ENCODE measurements at regions of chr10 and their contacts with region 1.

Region 1: DNA sequence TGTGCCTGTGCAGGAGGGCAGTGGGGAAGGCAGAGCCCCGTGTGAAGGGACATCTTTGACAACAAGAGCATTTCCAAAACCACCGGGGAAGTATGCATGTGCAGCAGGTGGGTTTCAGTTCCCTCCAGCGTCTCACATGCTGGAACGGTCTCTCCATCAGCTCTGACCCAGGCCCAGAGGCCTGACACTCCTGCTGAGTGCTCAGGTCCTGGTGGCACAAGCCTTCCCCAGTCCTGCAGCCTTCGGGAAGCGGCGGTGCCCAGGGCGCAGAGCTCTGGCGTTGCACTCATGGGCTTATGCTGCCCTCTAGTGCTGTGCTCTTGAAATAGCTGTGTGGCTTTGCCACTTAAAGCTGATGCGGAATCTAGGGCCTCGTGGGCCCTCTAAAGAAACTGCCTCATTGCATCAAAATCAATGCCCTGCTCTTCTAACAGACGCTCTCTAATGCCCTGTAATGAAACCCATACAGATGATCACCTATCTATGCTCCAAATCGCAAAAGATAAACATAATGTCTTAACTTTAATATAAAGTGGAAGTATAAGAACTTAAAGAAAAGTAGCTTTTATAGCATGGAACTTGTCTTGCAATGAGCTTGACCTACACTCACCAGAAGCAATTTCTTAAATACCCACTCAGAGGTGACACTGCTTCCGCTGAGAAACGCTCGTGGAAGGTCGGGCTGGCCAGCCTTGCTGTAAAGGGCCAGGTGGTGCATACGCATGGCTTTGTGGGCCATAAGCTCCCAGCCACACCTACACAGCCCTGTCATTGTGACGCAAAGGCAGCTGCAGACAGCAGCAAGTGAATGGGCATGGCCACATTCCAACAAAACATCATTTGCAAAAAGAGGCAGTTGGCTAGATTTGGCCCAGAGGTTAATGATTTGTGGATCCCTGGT is 38.6 kb downstream of the CLRN3 start:
- DNase-seq: peak; percentile 86
- H3K4me3 ChIP-seq: no peak overlapping the region
- H3K27ac ChIP-seq: no peak overlapping the region
- H3K4me1 ChIP-seq: no peaks in the 10 kb centered on the region; a peak in 1 of 4 replicates
- H3K27me3 ChIP-seq: no peaks in the 10 kb centered on the region
- CTCF ChIP-seq: peak; percentile 84
- EP300 ChIP-seq: no peak
- RAD21 ChIP-seq: peak; percentile 95

Region 2: DNA sequence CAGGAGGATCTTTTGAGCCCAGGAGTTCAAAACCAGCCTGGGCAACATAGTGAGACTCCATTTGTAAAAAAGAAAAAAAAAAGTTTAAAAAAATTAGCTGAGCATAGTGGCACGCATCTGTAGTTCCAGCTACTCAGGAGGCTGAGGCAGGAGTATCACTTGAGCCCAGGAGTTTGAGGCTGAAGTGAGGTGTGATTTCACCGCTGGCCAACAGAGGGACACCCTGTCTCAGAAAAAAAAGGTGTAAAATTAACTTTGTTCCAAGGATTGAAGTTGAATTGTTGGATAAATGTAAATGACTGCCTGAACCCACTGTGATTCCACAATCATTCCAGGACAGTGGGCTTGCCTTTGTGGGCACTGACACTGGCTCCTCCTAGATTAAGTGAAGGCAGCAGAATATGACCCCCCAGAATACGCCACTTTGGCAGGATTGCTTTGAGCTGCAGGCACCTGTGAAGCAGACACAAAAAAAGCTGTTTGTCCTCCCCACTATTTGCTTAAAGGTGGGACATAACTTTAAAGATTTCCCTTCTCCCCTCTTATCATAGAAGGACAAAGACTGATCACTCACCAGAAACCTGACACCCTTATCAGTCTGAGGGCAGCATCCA is 174.4 kb before region 1 on chr10:
- CTCF ChIA-PET with region 1: interaction called, 19 read pairs
- POLR2A ChIA-PET with region 1: no interaction called
- DNase-seq: no peak
- H3K4me3 ChIP-seq: no peak overlapping the region
- H3K27ac ChIP-seq: no peak overlapping the region
- H3K4me1 ChIP-seq: no peaks in the 10 kb centered on the region
- H3K27me3 ChIP-seq: no peaks in the 10 kb centered on the region
- CTCF ChIP-seq: peak; percentile 33
- EP300 ChIP-seq: no peak
- RAD21 ChIP-seq: peak; percentile 36

Region 3: DNA sequence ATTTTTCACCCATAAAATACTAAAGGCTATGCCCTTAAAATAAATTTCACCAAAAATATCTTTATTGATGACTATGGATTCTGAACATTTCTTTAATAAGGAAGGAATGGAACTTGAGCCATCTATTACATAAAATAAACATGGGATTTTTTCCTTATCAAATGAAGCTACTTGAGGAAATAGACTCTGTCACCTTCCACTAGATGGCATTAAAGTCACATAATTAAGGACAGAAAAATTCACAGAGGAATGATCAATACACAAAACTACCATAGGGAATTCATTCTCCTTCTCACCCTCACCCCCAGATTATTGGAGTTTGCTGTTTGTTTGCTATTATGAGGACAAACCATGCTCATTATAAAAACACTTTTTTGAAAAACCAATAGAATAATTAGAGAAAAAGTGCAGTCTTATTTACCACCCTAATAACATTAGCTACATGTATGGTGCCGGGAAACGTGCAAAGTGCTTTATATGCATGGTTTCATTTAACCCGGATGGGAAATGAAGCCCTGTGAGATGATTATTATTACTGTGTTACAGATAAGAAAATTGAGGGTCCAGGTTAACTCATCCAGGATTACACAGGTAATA is 138.2 kb before region 1 on chr10:
- CTCF ChIA-PET with region 1: interaction called, 98 read pairs
- POLR2A ChIA-PET with region 1: interaction called, 5 read pairs
- DNase-seq: peak; percentile 32
- H3K4me3 ChIP-seq: no peak overlapping the region; a peak in 1 of 4 replicates
- H3K27ac ChIP-seq: no peak overlapping the region
- H3K4me1 ChIP-seq: no peaks in the 10 kb centered on the region
- H3K27me3 ChIP-seq: no peaks in the 10 kb centered on the region
- CTCF ChIP-seq: peak; percentile 51
- EP300 ChIP-seq: no peak
- RAD21 ChIP-seq: peak; percentile 65

Region 4: DNA sequence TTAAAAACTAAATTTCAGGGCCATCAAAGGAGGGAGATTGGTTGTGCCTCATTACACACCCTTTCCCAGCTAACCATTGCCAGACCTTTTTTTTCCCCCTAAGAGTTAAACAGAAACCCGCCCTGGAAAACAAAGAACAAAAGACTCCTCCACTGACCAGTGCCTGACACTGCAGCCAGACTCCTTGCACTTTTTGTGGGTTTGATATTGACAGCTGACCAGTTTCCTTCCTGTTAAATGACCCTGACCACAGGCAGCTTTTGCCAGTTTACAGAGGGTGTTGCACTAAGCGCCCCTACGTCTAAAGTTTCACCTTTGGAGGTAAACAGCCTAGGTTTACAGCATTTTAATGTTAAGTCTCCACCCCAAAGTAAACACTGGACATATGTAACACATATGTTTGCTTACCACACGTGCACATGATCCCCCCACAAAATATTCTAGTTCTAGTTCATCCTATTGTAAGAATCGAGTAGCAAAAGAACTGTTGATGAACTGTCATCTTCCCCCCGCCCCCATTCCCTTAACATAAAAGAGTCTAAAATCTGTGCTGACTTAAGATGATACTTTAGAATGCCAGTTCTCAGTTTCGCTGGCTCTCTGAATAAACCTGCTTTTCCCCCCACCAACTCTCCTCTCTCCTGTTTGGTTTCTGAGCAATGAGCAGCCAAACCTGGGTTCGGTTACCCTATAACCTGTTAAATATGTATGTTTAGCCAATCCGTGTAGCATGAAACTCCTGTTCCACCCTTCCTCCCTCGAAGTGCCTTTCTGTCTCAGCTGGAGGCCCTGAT is 79.2 kb before region 1 on chr10:
- CTCF ChIA-PET with region 1: interaction called, 10 read pairs
- POLR2A ChIA-PET with region 1: no interaction called
- DNase-seq: no peak
- H3K4me3 ChIP-seq: no peak overlapping the region
- H3K27ac ChIP-seq: no peak overlapping the region
- H3K4me1 ChIP-seq: no peaks in the 10 kb centered on the region
- H3K27me3 ChIP-seq: no peaks in the 10 kb centered on the region
- CTCF ChIP-seq: no peak
- EP300 ChIP-seq: no peak
- RAD21 ChIP-seq: no peak

Region 5: GRCh38 chr10:127872871-127873600 is 18.9 kb after region 1 on chr10:
- CTCF ChIA-PET with region 1: interaction called, 17 read pairs
- POLR2A ChIA-PET with region 1: no interaction called
- DNase-seq: no peak
- H3K4me3 ChIP-seq: no peak overlapping the region
- H3K27ac ChIP-seq: no peak overlapping the region
- H3K4me1 ChIP-seq: no peaks in the 10 kb centered on the region
- H3K27me3 ChIP-seq: no peaks in the 10 kb centered on the region; the same call in 1 of the 2 replicates
- CTCF ChIP-seq: no peak
- EP300 ChIP-seq: no peak
- RAD21 ChIP-seq: peak; percentile 39

Region 6: GRCh38 chr10:128069351-128070051 is 215.4 kb after region 1 on chr10:
- CTCF ChIA-PET with region 1: interaction called, 17 read pairs
- POLR2A ChIA-PET with region 1: no interaction called
- DNase-seq: peak; percentile 85
- H3K4me3 ChIP-seq: peak overlapping the region in 1 of 2 experiments; percentile 11; a peak in 1 of 4 replicates
- H3K27ac ChIP-seq: no peak overlapping the region
- H3K4me1 ChIP-seq: no peaks in the 10 kb centered on the region
- H3K27me3 ChIP-seq: no peaks in the 10 kb centered on the region
- CTCF ChIP-seq: peak; percentile 83
- EP300 ChIP-seq: no peak
- RAD21 ChIP-seq: peak; percentile 95